HEK293 (cell line): ENCODE measurements at regions of chr9 and their contacts with region 1.

Region 1: GRCh38 chr9:94681508-94681907 is 42.2 kb upstream of the FBP1 start:
- H3K4me3 ChIP-seq: no peak overlapping the region
- H3K27ac ChIP-seq: no peak overlapping the region
- H3K4me1 ChIP-seq: no peaks in the 10 kb centered on the region
- CTCF ChIP-seq: peak; percentile 57; the same call in 1 of the 2 replicates

Region 2: GRCh38 chr9:94692601-94693000 is 11.1 kb after region 1 on chr9:
- CTCF ChIA-PET with region 1: interaction called, 38 read pairs
- POLR2A ChIA-PET with region 1: interaction called, 3 read pairs
- H3K4me3 ChIP-seq: no peak overlapping the region
- H3K27ac ChIP-seq: no peak overlapping the region
- H3K4me1 ChIP-seq: peaks cover 8% of the 10 kb centered on the region; the same call in 1 of the 2 replicates
- CTCF ChIP-seq: no peak

Region 3: DNA sequence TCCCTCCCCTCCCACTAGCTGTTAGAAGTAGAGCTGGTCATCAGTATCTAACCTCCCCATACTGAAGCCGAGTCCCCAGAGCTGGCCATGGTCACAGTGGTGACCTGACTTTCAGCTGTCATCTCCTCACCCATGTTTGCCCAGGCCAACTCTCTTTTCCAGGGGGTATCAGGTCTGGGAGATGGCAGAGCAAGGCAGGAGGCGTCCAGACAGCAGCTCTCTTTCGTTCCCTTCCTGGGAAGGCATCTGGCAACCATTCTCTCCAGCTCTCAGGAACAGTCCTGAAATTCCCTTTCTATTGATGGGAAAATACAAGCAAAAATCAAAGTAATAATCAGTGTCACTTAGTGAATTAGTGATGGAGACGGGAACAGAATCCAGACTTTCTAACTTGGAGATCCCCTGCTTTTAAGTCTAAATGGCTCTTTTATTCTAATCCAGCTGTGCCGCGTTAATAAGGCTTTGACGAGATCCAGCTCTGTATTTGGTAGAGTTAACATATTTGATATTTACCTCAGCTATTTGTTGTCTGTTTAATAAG is 23.7 kb after region 1 on chr9:
- CTCF ChIA-PET with region 1: interaction called, 15 read pairs
- POLR2A ChIA-PET with region 1: no interaction called
- H3K4me3 ChIP-seq: no peak overlapping the region
- H3K27ac ChIP-seq: no peak overlapping the region
- H3K4me1 ChIP-seq: no peaks in the 10 kb centered on the region
- CTCF ChIP-seq: no peak

Region 4: GRCh38 chr9:94783102-94783664 is 101.7 kb after region 1 on chr9:
- CTCF ChIA-PET with region 1: interaction called, 39 read pairs
- POLR2A ChIA-PET with region 1: no interaction called
- H3K4me3 ChIP-seq: no peak overlapping the region
- H3K27ac ChIP-seq: no peak overlapping the region
- H3K4me1 ChIP-seq: no peaks in the 10 kb centered on the region
- CTCF ChIP-seq: peak; percentile 49

Region 5: DNA sequence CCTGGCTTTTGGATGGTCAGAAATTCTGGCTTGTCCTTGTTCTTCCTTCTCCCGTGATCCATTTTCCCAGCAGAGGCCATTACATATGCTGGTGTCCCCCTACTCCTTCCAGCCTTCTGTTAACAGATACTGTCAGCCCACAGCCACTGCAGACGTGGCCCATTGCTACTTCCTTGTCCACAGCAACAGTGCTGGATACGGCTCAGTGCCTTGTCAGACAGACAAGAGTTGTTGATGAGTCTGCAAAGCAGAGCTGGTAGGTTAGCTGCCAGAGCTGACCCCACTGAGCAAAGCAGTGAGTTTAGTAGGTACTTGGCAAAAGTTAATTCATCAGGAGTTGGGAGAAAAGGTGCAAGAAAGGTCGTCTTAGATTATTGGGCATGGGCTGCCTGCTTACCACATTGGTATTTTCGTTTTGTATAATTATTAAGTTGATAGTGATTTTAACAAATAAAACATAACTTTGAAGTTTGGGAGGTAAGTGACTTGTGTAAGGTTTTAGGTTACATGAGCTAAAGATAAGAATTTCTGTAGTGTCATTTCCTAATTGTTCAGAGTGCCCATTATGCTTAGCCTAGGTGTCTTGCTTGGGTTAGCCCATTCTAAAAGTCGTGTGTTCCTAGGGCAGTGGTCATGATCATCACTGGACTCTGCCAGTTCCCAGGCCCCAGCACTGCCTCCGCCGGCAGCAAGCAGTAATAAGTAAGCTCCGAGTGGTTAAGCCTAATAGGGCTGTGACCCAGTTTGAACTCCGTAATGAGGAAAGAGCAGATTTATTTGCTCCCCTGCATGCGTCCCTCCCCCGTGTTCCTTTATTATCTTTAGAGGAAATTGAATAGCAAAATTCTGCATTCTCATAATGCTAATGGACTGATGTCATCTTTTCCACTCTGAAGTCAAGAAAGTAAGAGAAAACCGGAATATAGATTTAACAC is 344.0 kb after region 1 on chr9:
- CTCF ChIA-PET with region 1: interaction called, 10 read pairs
- POLR2A ChIA-PET with region 1: no interaction called
- H3K4me3 ChIP-seq: no peak overlapping the region
- H3K27ac ChIP-seq: no peak overlapping the region
- H3K4me1 ChIP-seq: peaks cover 18% of the 10 kb centered on the region
- CTCF ChIP-seq: no peak

Region 6: GRCh38 chr9:95127249-95128176 is 446.0 kb after region 1 on chr9:
- CTCF ChIA-PET with region 1: interaction called, 133 read pairs
- POLR2A ChIA-PET with region 1: no interaction called
- H3K4me3 ChIP-seq: no peak overlapping the region
- H3K27ac ChIP-seq: no peak overlapping the region
- H3K4me1 ChIP-seq: 0 out of 2 replicates have a peak, but pooled peaks cover 9% of the 10 kb centered on the region
- CTCF ChIP-seq: peak; percentile 85